T-cell (primary cell): ENCODE measurements at regions of chr5 and their contacts with region 1.

Region 1: DNA sequence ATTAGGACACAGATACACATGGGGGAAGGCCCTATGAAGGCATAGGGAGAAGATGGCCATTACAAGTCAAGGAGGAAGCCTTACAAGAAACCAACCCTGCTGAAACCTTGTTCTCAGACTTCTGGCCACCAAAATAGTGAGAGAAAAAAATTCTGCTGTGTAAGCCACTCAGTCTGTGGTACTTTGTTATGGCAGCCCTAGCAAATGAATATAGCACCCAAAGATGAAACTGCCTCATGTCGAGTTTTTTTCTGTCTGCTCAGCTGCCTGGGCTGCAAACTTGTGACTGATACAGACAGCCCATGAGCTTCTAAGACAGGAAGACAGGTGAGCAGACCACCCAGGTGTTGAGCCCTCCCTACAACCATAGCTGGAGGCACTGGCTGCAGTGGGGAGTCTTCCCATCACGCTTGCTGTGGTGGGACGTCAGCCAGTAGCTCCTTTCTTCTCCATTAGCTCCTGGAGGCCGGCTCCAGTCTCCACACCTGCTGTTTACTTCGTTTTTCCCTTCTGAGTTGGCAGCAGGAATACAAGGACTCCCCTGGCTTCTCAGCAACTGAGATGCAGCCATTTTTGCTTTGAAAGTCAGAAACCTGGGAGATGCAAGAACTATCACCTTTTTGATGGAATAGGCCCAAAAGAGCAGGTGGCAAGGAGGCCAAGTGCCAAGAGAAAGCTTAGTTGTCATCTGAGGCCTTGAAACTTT is 164.9 kb downstream of the SEMA6A start:
- DNase-seq: no peak
- ATAC-seq: no peak
- H3K4me3 ChIP-seq: no peak overlapping the region
- H3K4me3 Mint-ChIP-seq: no peak overlapping the region
- H3K27ac ChIP-seq: no peak overlapping the region
- H3K27ac Mint-ChIP-seq: no peak overlapping the region
- H3K4me1 ChIP-seq: no peaks in the 10 kb centered on the region
- H3K4me1 Mint-ChIP-seq: no peaks in the 10 kb centered on the region
- H3K27me3 ChIP-seq: no peaks in the 10 kb centered on the region
- H3K27me3 Mint-ChIP-seq: no peaks in the 10 kb centered on the region

Region 2: GRCh38 chr5:116543499-116543898 is 133.8 kb after region 1 on chr5:
- CTCF ChIA-PET with region 1: no interaction called
- POLR2A ChIA-PET with region 1: interaction called in 1 of 2 experiments, 15 read pairs
- DNase-seq: no peak
- ATAC-seq: no peak
- H3K4me3 ChIP-seq: no peak overlapping the region
- H3K4me3 Mint-ChIP-seq: no peak overlapping the region
- H3K27ac ChIP-seq: no peak overlapping the region
- H3K27ac Mint-ChIP-seq: no peak overlapping the region
- H3K4me1 ChIP-seq: no peaks in the 10 kb centered on the region
- H3K4me1 Mint-ChIP-seq: no peaks in the 10 kb centered on the region
- H3K27me3 ChIP-seq: no peaks in the 10 kb centered on the region
- H3K27me3 Mint-ChIP-seq: peaks cover 0 to 7% of the 10 kb centered on the region in 2 donors